ENCODE measurements at regions of chr7 and their contacts with region 1.

Region 1: DNA sequence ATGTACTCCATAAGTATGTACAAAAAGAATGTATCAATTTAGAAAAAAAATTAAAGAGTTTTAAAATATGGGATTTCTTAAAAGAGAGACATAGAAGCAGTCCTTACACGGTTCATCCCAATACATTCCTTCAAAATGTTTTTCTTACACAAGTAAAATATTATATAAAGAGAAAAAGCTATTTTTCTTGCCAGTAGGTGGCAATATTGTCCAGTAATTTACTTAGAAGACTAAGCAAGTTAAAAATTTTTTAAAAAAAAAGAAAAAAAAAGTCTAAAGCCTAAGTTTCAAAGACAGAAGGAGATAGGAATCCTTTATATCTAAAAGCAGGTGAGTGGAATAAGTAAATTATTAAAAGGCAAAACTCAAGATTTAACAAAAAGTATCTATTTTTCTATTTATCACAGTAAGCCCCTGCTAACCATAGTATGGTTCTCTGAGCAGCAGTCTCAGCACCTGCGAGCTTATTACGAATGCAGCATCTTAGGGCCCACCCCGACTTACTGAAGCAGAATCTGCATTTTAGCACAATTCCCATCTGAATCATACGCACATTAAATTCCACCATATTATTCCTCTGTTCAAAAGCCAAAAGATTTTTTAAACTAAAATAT is 240.6 kb downstream of the DGKI start:
- DNase-seq: no peak
- H3K4me3 ChIP-seq: no peak overlapping the region
- CTCF ChIP-seq: no peak

Region 2: GRCh38 chr7:137626469-137627067 is 20.4 kb after region 1 on chr7:
- CTCF ChIA-PET with region 1: interaction called, 52 read pairs
- POLR2A ChIA-PET with region 1: no interaction called
- DNase-seq: no peak
- H3K4me3 ChIP-seq: no peak overlapping the region
- CTCF ChIP-seq: peak; percentile 79

Region 3: DNA sequence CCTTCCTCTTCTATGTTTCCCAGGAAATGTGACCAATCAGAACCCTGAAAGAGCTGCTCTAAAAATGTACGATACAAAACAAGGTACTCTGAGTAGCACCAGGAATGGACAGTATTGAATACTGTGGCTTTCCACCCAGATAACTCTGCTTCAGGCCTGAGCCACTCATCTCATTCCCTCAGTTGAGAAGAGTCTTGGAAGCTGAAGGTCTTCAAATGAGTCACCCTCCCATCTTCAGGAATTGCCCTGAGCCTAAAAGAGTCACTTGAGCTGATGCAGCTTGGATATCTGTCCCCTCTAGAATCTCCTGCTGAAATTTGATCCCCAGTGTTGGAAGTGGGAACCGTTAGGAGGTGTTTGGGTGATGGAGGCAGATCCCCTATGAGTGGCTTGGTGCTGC is 30.2 kb after region 1 on chr7:
- CTCF ChIA-PET with region 1: interaction called, 10 read pairs
- POLR2A ChIA-PET with region 1: no interaction called
- DNase-seq: no peak
- H3K4me3 ChIP-seq: no peak overlapping the region
- CTCF ChIP-seq: no peak

Region 4: DNA sequence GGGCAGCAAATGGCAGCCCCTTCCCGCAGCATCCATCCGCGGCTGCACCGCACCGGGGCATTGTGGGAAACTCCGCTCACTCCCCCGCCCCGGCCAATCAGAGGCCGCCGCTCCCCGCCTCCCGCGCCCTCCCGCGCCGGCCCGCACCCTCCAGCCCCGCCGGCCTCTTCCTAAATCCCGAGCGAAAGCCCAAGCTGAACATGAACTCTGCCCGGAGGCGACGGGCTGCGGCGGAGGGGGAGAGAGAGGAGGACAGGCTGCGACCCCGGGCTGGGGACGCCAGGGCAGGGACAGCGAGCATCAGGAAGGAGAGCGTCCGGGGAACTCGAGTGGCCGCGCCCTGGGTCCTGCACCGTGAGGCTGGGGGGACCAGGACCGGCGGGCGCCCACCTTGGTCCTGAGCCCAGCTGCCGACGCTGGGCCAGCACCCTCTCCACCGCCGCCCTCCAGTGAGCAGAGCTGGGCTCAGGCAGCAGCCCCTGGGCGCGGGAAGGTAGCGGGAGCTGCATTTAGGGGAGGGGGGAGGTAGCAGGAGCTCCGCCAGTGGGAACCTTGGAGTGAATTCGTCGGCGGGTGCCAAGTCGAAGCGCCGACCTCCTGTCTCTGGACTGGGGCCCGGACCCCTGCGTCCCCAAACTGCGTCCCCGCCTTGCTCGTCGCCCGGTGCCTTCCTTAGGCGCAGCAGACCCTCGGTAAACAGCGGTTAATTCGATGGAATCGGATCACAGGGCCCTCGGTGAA is 240.8 kb after region 1 on chr7 and contains the start of gene DGKI:
- CTCF ChIA-PET with region 1: no interaction called
- POLR2A ChIA-PET with region 1: no interaction called
- DNase-seq: no peak
- H3K4me3 ChIP-seq: peak within 1 kb of the TSS; percentile 58
- CTCF ChIP-seq: no peak

Region 5: GRCh38 chr7:138008547-138009349 is 402.6 kb after region 1 on chr7:
- CTCF ChIA-PET with region 1: interaction called, 19 read pairs
- POLR2A ChIA-PET with region 1: no interaction called
- DNase-seq: no peak
- H3K4me3 ChIP-seq: no peak overlapping the region
- CTCF ChIP-seq: peak; percentile 66

Region 6: DNA sequence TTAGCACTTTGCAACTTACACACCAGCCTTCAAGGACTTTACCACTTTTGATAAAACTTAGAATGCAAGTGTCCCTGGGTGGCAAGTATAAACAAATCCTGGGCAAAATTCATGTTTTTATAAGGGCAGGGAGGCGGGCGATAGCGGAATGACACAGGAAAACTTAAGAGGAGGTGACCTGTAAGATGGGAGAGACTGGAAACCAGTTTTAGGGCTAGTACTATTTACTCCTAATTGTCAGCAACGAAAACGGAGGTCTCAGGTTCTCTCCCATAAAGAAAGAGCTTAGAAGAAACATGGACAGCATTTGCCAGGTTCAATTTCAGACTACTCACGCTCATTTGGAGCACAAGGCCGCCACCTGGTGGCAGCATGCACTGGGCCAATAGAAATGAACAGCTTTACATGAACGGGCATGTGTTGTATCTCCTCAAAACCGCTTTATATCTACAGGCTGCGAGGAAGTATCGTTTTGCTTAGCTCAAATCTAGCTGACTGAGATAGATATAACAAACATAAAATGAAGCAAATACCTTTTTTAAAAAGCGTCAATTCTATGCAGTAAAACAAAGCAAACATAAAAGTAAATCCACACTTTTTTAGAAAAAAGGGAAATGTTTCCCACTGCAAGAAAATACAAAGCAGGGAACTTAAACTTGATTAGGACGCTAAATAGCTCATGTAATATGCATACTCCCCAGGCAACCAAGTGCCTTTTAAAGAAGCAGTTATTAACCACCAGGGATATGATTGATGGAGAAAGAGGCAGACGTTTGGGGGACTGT is 1132.6 kb after region 1 on chr7:
- CTCF ChIA-PET with region 1: interaction called, 18 read pairs
- POLR2A ChIA-PET with region 1: no interaction called
- DNase-seq: peak; percentile 49
- H3K4me3 ChIP-seq: no peak overlapping the region
- CTCF ChIP-seq: peak; percentile 91